A549 (cell line): ENCODE measurements at regions of chr17 and their contacts with region 1.

Region 1: DNA sequence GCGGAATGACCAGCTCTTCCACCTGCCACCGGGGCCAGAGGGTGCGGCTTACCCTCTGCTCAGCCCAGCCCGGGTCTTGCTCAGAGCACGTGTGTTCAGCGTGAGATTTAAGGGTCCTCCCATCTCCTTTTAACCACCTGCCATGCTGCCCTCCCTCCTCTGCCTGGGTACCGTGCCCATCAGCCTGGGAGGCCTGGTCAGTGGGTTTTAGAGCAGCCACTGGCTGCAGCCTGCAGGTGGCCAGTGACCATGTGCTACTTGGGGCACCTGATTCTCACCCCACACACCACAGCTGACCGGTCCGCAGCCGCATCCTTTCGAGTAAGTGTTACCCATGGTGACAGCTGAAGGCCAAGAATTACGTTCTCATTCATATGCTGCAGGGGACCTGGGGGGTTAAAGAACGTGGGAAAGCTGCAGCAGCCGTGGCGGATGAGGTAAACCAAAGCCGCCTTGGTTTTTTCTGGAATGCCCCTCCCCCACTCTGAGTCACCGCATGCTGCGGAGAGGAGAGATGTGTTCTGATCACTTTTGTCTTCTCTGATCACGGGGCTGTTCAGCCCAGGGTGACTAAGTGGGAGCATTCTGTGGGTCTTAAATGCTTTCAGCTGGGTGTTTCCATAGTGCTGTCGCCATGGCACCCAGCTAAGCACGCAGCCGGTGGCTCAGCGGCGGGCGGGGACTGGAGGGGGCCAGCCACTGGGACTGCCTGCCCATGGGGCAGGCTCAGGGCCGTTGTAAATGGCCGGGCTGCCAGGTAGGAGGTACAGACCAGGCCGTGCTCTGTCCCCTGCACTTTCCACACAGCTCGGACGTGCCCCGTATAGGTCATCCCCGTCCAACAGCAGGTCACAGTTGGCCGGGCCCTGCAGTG is 59.8 kb downstream of the BAIAP2 start:
- DNase-seq: peak; percentile 91 to 95
- ATAC-seq: peak; percentile 59 to 65
- H3K4me3 ChIP-seq: no peak overlapping the region
- H3K27ac ChIP-seq: peak overlapping the region; percentile 87 to 92
- H3K4me1 ChIP-seq: peaks cover 72% of the 10 kb centered on the region
- CTCF ChIP-seq: no peak
- EP300 ChIP-seq: no peak
- POLR2A ChIP-seq: no peak
- RAD21 ChIP-seq: peak in 1 of 2 experiments; percentile 12; a peak in 1 of 5 replicates

Region 2: DNA sequence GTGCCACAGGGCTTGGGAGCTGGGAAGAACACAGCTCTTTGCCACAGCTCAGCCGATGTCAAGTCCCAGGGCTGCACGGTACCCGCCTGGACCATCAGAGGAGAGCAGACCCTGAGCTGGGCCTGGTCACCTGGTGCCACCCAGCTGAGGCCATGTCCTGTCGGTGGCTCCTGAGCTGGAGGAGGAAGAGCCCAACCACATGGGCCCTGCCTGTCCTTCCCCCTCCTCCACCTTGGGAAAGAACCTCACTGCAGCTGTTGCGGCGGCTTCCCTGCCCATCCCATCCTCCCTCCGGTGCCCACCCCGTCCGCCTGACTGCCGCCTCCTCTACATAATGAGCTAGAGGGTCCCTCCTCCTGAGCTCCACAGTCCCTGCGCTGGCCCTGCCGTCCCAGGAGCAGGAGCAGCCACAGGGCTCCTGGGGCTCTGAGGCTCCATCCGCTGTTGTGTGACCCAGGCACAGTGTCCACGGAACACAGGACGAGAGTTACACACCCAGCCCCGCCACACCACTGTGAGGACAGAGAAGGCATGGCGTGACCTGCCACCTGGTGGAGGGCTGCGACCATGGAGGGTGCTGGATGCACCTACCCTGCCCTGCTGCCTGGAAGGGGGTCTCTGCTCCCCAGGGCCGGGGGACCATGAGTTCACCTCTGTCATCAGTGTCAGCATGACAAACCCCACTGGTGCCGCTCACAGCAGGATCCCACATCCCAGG is 124.5 kb before region 1 on chr17:
- CTCF ChIA-PET with region 1: no interaction called
- POLR2A ChIA-PET with region 1: no interaction called
- DNase-seq: peak; percentile 44 to 75
- ATAC-seq: peak; percentile 65 to 77
- H3K4me3 ChIP-seq: no peak overlapping the region
- H3K27ac ChIP-seq: no peak overlapping the region
- H3K4me1 ChIP-seq: no peaks in the 10 kb centered on the region
- CTCF ChIP-seq: peak; percentile 37; the same call in 2 of the 3 replicates
- EP300 ChIP-seq: no peak
- POLR2A ChIP-seq: no peak
- RAD21 ChIP-seq: peak; percentile 58 to 65; a peak in 4 of 5 replicates

Region 3: DNA sequence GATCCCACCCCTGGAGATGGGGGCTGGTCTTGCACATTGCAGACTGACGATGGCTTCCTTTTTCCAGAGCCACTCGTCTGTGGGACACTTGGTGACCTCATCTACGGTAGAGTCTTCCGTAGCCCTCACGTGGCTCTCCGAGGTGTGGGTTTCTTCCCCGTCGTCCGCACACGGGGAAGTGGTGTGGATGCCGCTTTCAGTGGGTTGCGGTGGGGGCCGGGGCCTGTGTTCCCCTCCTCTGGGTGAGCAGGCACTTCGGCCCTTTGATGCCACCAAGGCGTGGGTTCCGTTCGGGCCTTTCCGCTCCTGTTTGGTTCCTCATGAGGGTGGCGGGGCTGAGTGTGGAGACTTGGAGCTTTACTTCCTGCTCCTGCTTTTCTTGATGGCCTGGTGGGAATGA is 38.4 kb before region 1 on chr17:
- CTCF ChIA-PET with region 1: interaction called, 880 read pairs
- POLR2A ChIA-PET with region 1: no interaction called
- DNase-seq: no peak
- ATAC-seq: no peak
- H3K4me3 ChIP-seq: no peak overlapping the region
- H3K27ac ChIP-seq: no peak overlapping the region; a peak in 1 of 6 replicates
- H3K4me1 ChIP-seq: peaks cover 9% of the 10 kb centered on the region; the same call in 1 of the 3 replicates
- CTCF ChIP-seq: no peak
- EP300 ChIP-seq: no peak
- POLR2A ChIP-seq: no peak
- RAD21 ChIP-seq: no peak

Region 4: DNA sequence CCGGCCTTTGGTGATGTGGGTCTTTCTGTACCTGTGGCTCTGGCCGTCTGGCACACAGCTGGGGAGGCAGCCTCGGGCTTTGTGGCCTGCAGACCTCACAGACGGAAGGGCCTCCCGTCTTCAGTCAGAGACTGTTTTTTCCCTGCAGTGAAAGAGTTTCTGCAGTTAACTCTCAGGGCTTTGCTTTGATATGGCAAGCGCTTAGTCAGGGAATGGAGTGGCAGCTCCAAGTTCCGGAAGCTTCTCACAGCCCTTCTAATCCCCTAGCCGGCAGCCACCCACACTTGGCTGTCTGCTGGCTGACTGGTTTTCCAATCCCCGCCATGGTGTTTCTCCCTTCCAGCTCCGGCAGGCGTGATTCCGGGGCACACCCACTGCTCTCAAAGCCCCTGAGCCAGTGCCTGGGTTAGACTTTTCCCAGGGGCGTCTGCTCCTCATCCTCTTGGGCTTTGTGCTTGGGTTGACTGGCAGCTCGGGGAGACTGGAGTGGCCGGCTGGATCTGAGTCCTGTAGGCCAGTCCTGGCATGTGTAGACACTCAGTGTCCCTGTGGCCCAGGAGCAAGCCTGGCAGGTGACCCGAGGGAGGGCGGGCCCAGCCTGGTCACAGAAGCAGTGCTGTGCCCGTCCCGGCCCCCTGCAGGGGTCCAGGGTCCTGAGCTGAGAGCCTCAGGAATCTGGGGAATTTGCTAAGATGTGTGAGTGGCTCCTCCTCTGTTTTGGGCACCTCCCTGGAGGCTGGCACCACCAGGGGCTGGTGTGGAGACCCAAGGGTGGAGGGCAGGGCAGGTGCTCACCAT is 29.9 kb before region 1 on chr17:
- CTCF ChIA-PET with region 1: interaction called, 41 read pairs
- POLR2A ChIA-PET with region 1: no interaction called
- DNase-seq: no peak
- ATAC-seq: no peak
- H3K4me3 ChIP-seq: no peak overlapping the region
- H3K27ac ChIP-seq: no peak overlapping the region
- H3K4me1 ChIP-seq: no peaks in the 10 kb centered on the region
- CTCF ChIP-seq: no peak
- EP300 ChIP-seq: no peak
- POLR2A ChIP-seq: no peak
- RAD21 ChIP-seq: no peak

Region 5: DNA sequence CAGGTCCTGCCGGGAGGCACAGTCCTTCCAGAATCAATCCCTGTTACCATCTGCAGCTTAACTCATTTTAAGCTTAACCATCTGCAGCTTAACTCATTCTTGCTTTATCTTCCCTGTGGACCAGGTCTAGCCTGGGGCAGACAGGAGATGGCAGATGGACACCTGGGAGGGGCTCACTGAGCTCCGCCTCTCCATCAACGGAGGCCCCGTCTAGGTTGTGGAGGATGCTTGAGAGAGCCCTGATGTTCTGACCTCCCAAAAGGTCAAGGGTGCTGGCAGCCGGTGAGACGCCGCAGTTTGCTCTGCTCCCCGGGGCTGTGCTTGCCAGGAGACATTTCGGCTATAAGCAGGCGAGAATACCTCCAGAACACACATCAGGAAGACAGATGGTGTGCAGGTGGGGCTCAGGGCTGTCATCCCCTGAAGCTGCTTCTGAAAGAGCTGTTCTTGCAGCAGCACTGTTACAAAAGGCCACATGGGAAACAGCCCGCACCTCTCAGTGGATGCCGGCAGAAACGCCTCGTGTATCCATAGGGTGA is 18.5 kb before region 1 on chr17:
- CTCF ChIA-PET with region 1: interaction called, 23 read pairs
- POLR2A ChIA-PET with region 1: no interaction called
- DNase-seq: no peak
- ATAC-seq: no peak
- H3K4me3 ChIP-seq: no peak overlapping the region
- H3K27ac ChIP-seq: no peak overlapping the region
- H3K4me1 ChIP-seq: peaks cover 5% of the 10 kb centered on the region; the same call in 1 of the 3 replicates
- CTCF ChIP-seq: no peak
- EP300 ChIP-seq: no peak
- POLR2A ChIP-seq: no peak
- RAD21 ChIP-seq: no peak

Region 6: GRCh38 chr17:81083125-81083765 is 11.5 kb before region 1 on chr17:
- CTCF ChIA-PET with region 1: interaction called, 66 read pairs
- POLR2A ChIA-PET with region 1: no interaction called
- DNase-seq: no peak
- ATAC-seq: no peak
- H3K4me3 ChIP-seq: no peak overlapping the region
- H3K27ac ChIP-seq: no peak overlapping the region
- H3K4me1 ChIP-seq: no peaks in the 10 kb centered on the region
- CTCF ChIP-seq: no peak
- EP300 ChIP-seq: no peak
- POLR2A ChIP-seq: no peak
- RAD21 ChIP-seq: no peak

Region 7: DNA sequence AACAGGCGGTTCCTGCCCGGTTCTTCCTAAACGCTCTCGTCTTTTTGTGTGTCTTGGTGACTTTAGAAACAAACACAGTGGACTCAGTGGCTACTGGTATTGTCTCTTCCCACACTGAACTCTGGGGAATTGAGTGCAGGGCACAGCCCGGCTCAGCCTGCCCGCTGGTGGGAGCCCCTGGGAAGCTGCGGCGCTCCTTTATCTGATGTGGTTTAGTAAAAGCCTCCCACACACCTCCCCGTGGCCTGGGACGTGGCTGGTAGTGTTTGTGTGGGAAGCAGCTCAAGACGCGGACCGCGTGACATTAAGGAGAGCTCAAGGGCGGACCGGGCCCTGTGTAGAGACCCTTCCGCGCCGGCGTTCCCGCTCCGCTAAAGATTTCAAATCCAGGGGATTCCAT is 15.2 kb after region 1 on chr17:
- CTCF ChIA-PET with region 1: interaction called, 104 read pairs
- POLR2A ChIA-PET with region 1: no interaction called
- DNase-seq: no peak
- ATAC-seq: no peak
- H3K4me3 ChIP-seq: no peak overlapping the region
- H3K27ac ChIP-seq: no peak overlapping the region
- H3K4me1 ChIP-seq: no peaks in the 10 kb centered on the region
- CTCF ChIP-seq: no peak
- EP300 ChIP-seq: no peak
- POLR2A ChIP-seq: no peak
- RAD21 ChIP-seq: no peak

Region 8: GRCh38 chr17:81119223-81120148 is 24.7 kb after region 1 on chr17:
- CTCF ChIA-PET with region 1: interaction called, 104 read pairs
- POLR2A ChIA-PET with region 1: no interaction called
- DNase-seq: peak; percentile 94 to 100
- ATAC-seq: peak; percentile 38 to 77
- H3K4me3 ChIP-seq: peak overlapping the region; percentile 56
- H3K27ac ChIP-seq: peak overlapping the region; percentile 55 to 84; a peak in 5 of 6 replicates
- H3K4me1 ChIP-seq: peaks cover 8% of the 10 kb centered on the region; the same call in 2 of the 3 replicates
- CTCF ChIP-seq: peak; percentile 48
- EP300 ChIP-seq: no peak
- POLR2A ChIP-seq: no peak
- RAD21 ChIP-seq: no peak

Region 9: GRCh38 chr17:81309070-81309905 is 214.5 kb after region 1 on chr17:
- CTCF ChIA-PET with region 1: no interaction called
- POLR2A ChIA-PET with region 1: no interaction called
- DNase-seq: peak; percentile 90 to 99
- ATAC-seq: peak; percentile 74 to 88
- H3K4me3 ChIP-seq: peak overlapping the region; percentile 48
- H3K27ac ChIP-seq: peak overlapping the region; percentile 82 to 91
- H3K4me1 ChIP-seq: peaks cover 35% of the 10 kb centered on the region
- CTCF ChIP-seq: peak; percentile 50
- EP300 ChIP-seq: no peak
- POLR2A ChIP-seq: peak; percentile 50
- RAD21 ChIP-seq: peak; percentile 52 to 69